ENCODE measurements at regions of chr19 and their contacts with region 1.

Region 1: GRCh38 chr19:12495002-12495802 is 10.6 kb upstream of the ZNF709 start:
- DNase-seq: peak; percentile 83 to 92
- H3K4me3 ChIP-seq: peak overlapping the region; percentile 45 to 71 (median 58)
- H3K27ac ChIP-seq: peak overlapping the region; percentile 31; the same call in 1 of the 2 replicates
- H3K4me1 ChIP-seq: no peaks in the 10 kb centered on the region; a peak in 1 of 7 replicates
- H3K27me3 ChIP-seq: no peaks in the 10 kb centered on the region
- CTCF ChIP-seq: peak; percentile 50 to 61 (median 60)
- EP300 ChIP-seq: peak in 1 of 2 experiments; percentile 48; a peak in 1 of 3 replicates
- POLR2A ChIP-seq: peak; percentile 70 to 89
- RAD21 ChIP-seq: peak; percentile 31 to 48; a peak in 3 of 4 replicates

Region 2: DNA sequence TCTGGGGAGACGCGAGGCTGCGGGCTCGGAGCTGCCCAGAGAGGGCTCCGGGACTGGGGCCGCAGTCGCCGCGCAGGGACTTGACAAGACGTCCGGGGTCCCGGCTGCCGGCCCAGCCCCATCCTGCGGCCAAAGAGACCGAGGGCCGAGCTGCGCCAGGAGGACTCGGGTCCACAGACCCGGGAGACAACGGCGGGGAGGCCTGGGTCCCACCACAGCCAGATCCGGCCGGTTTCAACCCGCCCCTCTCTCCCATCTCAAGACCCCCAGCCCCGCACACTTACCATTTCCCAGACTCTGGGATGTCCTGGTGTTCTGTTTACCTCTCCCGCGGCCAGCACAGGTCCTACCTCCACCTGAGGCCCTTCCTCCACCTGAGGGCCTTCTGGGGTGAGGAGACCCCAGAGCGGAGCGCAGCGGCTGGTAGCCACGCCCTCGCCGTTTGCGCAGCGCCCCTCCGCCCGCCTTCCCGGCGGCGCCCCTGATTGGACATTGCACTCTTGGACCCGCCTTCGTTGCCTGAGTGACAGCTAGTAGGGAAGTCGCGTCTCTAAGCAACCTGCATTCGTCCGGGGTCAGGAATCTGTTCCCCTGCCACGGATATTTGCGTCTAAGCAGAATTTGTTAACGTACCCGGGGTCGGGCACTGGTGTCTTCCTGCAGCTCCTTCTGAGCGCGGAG is 10.7 kb before region 1 on chr19 and contains the start of gene ZNF709:
- CTCF ChIA-PET with region 1: interaction called, 5 read pairs
- POLR2A ChIA-PET with region 1: interaction called, 43 read pairs
- DNase-seq: peak; percentile 88 to 98
- H3K4me3 ChIP-seq: peak within 1 kb of the TSS; percentile 75 to 86 (median 82)
- H3K27ac ChIP-seq: 0 out of 2 replicates have a peak within 1 kb of the TSS, but pooled peaks have one; percentile 3
- H3K4me1 ChIP-seq: 0 out of 7 replicates have a peak, but pooled peaks cover 0 to 1% (median 0%) of the 10 kb centered on the region in 4 experiments
- H3K27me3 ChIP-seq: peaks cover 0 to 3% (median under 1%) of the 10 kb centered on the region in 4 experiments; a peak in 2 of 7 replicates
- CTCF ChIP-seq: no peak
- EP300 ChIP-seq: no peak
- POLR2A ChIP-seq: peak; percentile 97 to 99
- RAD21 ChIP-seq: no peak
- total RNA-seq, gene ZNF709: 2.0 and 2.2 TPM in 2 replicates

Region 3: GRCh38 chr19:12513531-12514061 is 18.4 kb after region 1 on chr19:
- CTCF ChIA-PET with region 1: interaction called, 24 read pairs
- POLR2A ChIA-PET with region 1: interaction called, 8 read pairs
- DNase-seq: peak in 1 of 2 experiments; percentile 21
- H3K4me3 ChIP-seq: no peak overlapping the region
- H3K27ac ChIP-seq: no peak overlapping the region
- H3K4me1 ChIP-seq: no peaks in the 10 kb centered on the region
- H3K27me3 ChIP-seq: no peaks in the 10 kb centered on the region
- CTCF ChIP-seq: peak; percentile 63 to 92 (median 64)
- EP300 ChIP-seq: no peak
- POLR2A ChIP-seq: no peak
- RAD21 ChIP-seq: 0 out of 4 replicates have a peak, but pooled peaks of 1 of the 2 experiments have one; percentile 18

Measured in H1 (cell line).